Left colon (tissue), 2 donors: ENCODE measurements at regions of chr1 and their contacts with region 1.

Region 1: GRCh38 chr1:174968750-174969244 is 30.9 kb upstream of the CACYBP start:
- DNase-seq: no peak
- ATAC-seq: no peak

Region 2: DNA sequence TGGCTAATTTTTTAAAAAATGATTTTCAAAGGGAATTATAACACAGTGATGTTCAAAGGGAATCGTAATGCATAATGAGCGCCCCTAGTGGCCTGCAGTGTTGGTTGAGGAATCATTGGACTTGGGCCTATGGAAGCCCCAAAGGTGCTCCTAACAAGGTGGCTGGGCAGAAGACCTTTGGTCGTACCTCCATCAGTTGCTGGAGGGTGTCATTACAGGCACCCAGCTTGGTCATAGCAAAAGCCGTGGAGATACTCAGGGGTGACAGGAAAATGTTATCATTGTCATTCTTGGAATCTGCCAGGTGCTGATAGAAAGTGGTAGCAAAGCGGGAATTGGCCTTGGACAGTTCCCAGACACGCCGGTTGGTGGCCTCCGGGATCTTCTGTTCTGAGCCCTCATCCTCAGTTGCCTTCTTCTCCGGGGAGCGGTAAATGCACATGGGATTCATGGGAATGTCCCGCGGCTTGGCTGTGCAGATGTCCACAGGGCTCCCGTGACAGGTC is 1054.4 kb before region 1 on chr1:
- intact Hi-C with region 1: no loop called
- DNase-seq: peak in 1 of 2 donors; percentile 63
- ATAC-seq: peak; percentile 68

Region 3: GRCh38 chr1:174874331-174875053 is 94.3 kb before region 1 on chr1:
- intact Hi-C with region 1: loop called in 1 of 2 experiments (anchors 5 kb)
- DNase-seq: peak; percentile 42 to 67
- ATAC-seq: peak; percentile 58

Region 4: GRCh38 chr1:174912264-174912663 is 56.5 kb before region 1 on chr1:
- intact Hi-C with region 1: no loop called
- DNase-seq: no peak
- ATAC-seq: no peak

Region 5: DNA sequence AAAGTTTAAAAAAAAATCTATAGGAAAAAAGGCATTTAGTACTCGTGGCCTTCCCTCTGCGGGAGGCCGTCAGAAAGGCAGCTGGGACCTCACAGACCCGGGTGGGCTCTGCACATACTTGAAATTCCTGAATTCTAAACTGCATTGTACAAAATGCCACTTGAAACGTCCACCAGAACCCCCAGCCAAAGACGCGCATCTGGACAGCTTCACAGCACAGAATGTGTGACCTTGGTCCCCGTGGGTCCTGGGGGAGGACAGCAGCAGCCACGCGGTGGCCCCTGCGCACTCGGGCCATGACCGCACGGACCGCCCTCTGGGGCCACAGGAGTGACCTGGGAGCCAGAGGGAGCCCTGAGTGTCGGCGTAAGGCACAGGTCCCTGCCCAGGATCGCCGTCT is 75.0 kb after region 1 on chr1:
- intact Hi-C with region 1: no loop called
- DNase-seq: no peak
- ATAC-seq: no peak